ENCODE measurements at regions of chr15 and their contacts with region 1.

Region 1: GRCh38 chr15:79853458-79854328 is 43.1 kb downstream of the MTHFS start:
- DNase-seq: peak; percentile 75 to 89 (median 85)
- H3K4me3 ChIP-seq: no peak overlapping the region
- H3K27ac ChIP-seq: no peak overlapping the region
- H3K4me1 ChIP-seq: peaks cover 0 to 7% (median 1%) of the 10 kb centered on the region in 4 experiments
- H3K27me3 ChIP-seq: no peaks in the 10 kb centered on the region

Region 2: GRCh38 chr15:79339564-79340314 is 514.0 kb before region 1 on chr15:
- CTCF ChIA-PET with region 1: interaction called, 19 read pairs
- POLR2A ChIA-PET with region 1: no interaction called
- DNase-seq: peak; percentile 42 to 59 (median 54)
- H3K4me3 ChIP-seq: no peak overlapping the region
- H3K27ac ChIP-seq: no peak overlapping the region
- H3K4me1 ChIP-seq: no peaks in the 10 kb centered on the region
- H3K27me3 ChIP-seq: no peaks in the 10 kb centered on the region

Region 3: GRCh38 chr15:79380755-79381497 is 472.8 kb before region 1 on chr15:
- CTCF ChIA-PET with region 1: interaction called, 29 read pairs
- POLR2A ChIA-PET with region 1: no interaction called
- DNase-seq: peak; percentile 52 to 83 (median 69)
- H3K4me3 ChIP-seq: no peak overlapping the region
- H3K27ac ChIP-seq: no peak overlapping the region
- H3K4me1 ChIP-seq: no peaks in the 10 kb centered on the region
- H3K27me3 ChIP-seq: no peaks in the 10 kb centered on the region

Region 4: DNA sequence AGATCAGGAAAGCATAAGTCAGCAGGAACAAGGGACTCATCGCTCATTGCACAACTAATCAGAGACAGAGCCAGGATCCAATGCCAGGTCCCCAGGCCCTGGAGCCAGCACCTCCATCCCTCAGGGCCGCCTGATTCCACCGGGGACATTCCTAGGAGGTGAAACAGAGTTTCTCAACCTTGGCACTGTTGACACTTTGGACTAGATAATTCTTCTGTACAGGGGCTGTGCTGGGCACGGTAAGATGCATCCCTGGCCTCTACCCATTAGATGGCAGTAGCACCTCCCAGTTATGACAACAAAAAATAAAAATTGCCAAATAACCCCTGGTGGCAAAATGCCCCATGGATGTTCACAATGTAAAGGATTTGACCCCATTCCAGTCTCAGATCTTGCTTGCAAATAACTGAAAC is 84.6 kb before region 1 on chr15:
- CTCF ChIA-PET with region 1: interaction called, 90 read pairs
- POLR2A ChIA-PET with region 1: no interaction called
- DNase-seq: peak; percentile 36 to 73 (median 69)
- H3K4me3 ChIP-seq: no peak overlapping the region
- H3K27ac ChIP-seq: no peak overlapping the region
- H3K4me1 ChIP-seq: no peaks in the 10 kb centered on the region
- H3K27me3 ChIP-seq: peaks cover 0 to 5% (median 2%) of the 10 kb centered on the region in 5 experiments